ENCODE measurements at regions of chr1 and their contacts with region 1.

Region 1: GRCh38 chr1:154558575-154559465 is at the start of gene UBE2Q1:
- DNase-seq: peak; percentile 99 to 100 (median 99)
- ATAC-seq: peak; percentile 97 to 98 (median 98)
- H3K4me3 ChIP-seq: peak within 1 kb of the TSS; percentile 67 to 98 (median 95)
- H3K27ac ChIP-seq: peak within 1 kb of the TSS; percentile 85 to 97 (median 94)
- H3K4me1 ChIP-seq: peaks cover 3 to 36% (median 22%) of the 10 kb centered on the region in 12 donors
- H3K27me3 ChIP-seq: no peaks in the 10 kb centered on the region
- CTCF ChIP-seq: no peak
- POLR2A ChIP-seq: peak in 1 of 2 donors; percentile 63
- total RNA-seq, gene UBE2Q1: 22.1 to 79.4 (median 58.8) TPM

Region 2: DNA sequence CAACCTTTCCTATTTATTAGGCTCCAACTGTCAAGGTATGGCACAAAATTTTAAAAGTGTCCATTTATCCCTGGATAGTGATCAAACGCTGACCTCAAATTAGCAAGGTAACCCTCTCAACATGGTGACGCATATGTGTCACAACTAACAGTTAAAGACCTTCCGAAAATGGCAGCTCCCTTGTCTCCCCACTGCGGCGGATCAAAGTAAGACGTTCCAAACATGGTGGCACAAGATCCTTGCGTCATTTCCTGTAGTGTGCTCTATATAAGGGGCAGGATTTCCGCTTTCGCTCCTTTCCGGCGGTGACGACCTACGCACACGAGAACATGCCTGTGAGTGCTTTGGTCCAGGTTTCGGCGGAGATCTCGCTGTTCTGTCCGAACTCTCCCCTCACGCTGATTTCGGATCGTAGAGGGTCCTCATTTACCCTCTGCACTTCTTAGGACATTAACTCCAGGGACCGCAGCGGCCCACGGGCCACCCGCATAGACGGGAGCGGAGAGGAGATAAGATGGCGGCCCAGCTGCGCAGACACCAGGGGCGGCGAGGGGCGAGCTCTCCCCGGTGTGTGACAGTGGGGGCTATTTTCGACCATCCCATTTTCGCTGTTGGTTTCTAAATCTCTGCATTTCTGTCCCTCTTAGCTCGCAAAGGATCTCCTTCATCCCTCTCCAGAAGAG is 568.2 kb before region 1 on chr1 and contains the start of gene RPS27:
- intact Hi-C with region 1: no loop called
- DNase-seq: peak; percentile 84 to 95 (median 94)
- ATAC-seq: peak; percentile 76 to 90 (median 88)
- H3K4me3 ChIP-seq: peak within 1 kb of the TSS; percentile 48 to 93 (median 77)
- H3K27ac ChIP-seq: peak within 1 kb of the TSS; percentile 87 to 98 (median 94)
- H3K4me1 ChIP-seq: peaks cover 5 to 49% (median 31%) of the 10 kb centered on the region in 12 donors
- H3K27me3 ChIP-seq: no peaks in the 10 kb centered on the region
- CTCF ChIP-seq: peak in 1 of 12 donors; percentile 16
- POLR2A ChIP-seq: peak; percentile 66 to 94
- total RNA-seq, gene RPS27: 537 to 1,013 (median 772) TPM

Region 3: GRCh38 chr1:154075746-154076145 is 483.1 kb before region 1 on chr1:
- intact Hi-C with region 1: no loop called
- DNase-seq: no peak
- ATAC-seq: no peak
- H3K4me3 ChIP-seq: no peak overlapping the region
- H3K27ac ChIP-seq: no peak overlapping the region
- H3K4me1 ChIP-seq: no peaks in the 10 kb centered on the region
- H3K27me3 ChIP-seq: peaks cover 0 to 2% (median 0%) of the 10 kb centered on the region in 9 donors
- CTCF ChIP-seq: no peak
- POLR2A ChIP-seq: no peak

Region 4: GRCh38 chr1:154607609-154608396 is 49.0 kb after region 1 on chr1 and contains the start of gene ADAR:
- intact Hi-C with region 1: loop called in 1 of 10 experiments (anchors 5 kb)
- DNase-seq: peak; percentile 91 to 93 (median 93)
- ATAC-seq: peak; percentile 90 to 93 (median 92)
- H3K4me3 ChIP-seq: peak within 1 kb of the TSS; percentile 70 to 96 (median 88)
- H3K27ac ChIP-seq: peak within 1 kb of the TSS; percentile 88 to 98 (median 94)
- H3K4me1 ChIP-seq: peaks cover 4 to 79% (median 47%) of the 10 kb centered on the region in 12 donors
- H3K27me3 ChIP-seq: no peaks in the 10 kb centered on the region
- CTCF ChIP-seq: no peak
- POLR2A ChIP-seq: peak in 1 of 2 donors; percentile 50
- total RNA-seq, gene ADAR: 52.1 to 117 (median 63.1) TPM

Region 5: GRCh38 chr1:154747740-154748404 is 189.1 kb after region 1 on chr1:
- intact Hi-C with region 1: loop called in 1 of 10 experiments (anchors 10 kb)
- DNase-seq: peak in 4 of 5 donors; percentile 43 to 71 (median 61)
- ATAC-seq: peak; percentile 39 to 53 (median 47)
- H3K4me3 ChIP-seq: no peak overlapping the region
- H3K27ac ChIP-seq: peak overlapping the region in 6 of 12 donors; percentile 5 to 57 (median 30)
- H3K4me1 ChIP-seq: peaks cover 0 to 48% (median 19%) of the 10 kb centered on the region in 12 donors
- H3K27me3 ChIP-seq: no peaks in the 10 kb centered on the region
- CTCF ChIP-seq: no peak
- POLR2A ChIP-seq: no peak

Region 6: DNA sequence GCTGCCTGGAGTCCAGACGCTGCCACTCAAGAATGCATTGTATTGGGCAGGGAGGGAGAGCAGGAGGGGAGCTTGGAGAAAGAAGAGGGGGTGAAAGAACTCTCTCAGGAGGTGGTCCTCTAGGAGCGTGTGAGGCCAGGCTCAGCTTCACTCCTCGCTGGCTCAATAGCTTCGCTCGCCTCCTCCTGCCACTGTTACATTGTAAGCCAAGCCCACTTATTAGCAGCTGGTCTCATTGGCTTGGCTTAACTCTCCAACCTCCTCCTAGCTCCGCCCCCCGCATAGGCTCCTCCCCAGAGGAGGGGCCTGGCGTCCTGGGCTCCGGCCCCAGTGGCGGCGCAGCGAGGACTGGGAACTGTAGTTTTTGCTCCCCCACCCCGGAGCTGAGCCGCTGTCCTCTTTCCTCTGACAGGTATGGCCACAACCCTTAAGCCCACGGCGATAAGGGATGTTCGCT is 311.3 kb after region 1 on chr1 and contains the start of gene KCNN3:
- intact Hi-C with region 1: loop called in 5 of 10 experiments (anchors 1 to 5 kb)
- DNase-seq: peak; percentile 92 to 95 (median 94)
- ATAC-seq: peak; percentile 97 to 99 (median 98)
- H3K4me3 ChIP-seq: peak within 1 kb of the TSS; percentile 27 to 73 (median 57)
- H3K27ac ChIP-seq: peak within 1 kb of the TSS in 8 of 12 donors; percentile 27 to 65 (median 42)
- H3K4me1 ChIP-seq: peaks cover 0 to 47% (median 32%) of the 10 kb centered on the region in 12 donors
- H3K27me3 ChIP-seq: peaks cover 0 to 11% (median 0%) of the 10 kb centered on the region in 9 donors
- CTCF ChIP-seq: peak in 1 of 12 donors; percentile 5
- POLR2A ChIP-seq: peak in 1 of 2 donors; percentile 88
- total RNA-seq, gene KCNN3: 1.0 to 4.6 (median 3.0) TPM

Region 7: GRCh38 chr1:154936555-154937084 is 377.8 kb after region 1 on chr1 and contains the start of gene PMVK:
- intact Hi-C with region 1: loop called in 4 of 10 experiments (anchors 2 to 10 kb)
- DNase-seq: peak; percentile 96 to 97 (median 97)
- ATAC-seq: peak; percentile 93 to 96 (median 94)
- H3K4me3 ChIP-seq: peak within 1 kb of the TSS; percentile 39 to 80 (median 66)
- H3K27ac ChIP-seq: peak within 1 kb of the TSS; percentile 90 to 100 (median 98)
- H3K4me1 ChIP-seq: peaks cover 0 to 43% (median 18%) of the 10 kb centered on the region in 12 donors
- H3K27me3 ChIP-seq: no peaks in the 10 kb centered on the region
- CTCF ChIP-seq: peak in 10 of 12 donors; percentile 17 to 55 (median 37)
- POLR2A ChIP-seq: peak in 1 of 2 donors; percentile 46
- total RNA-seq, gene PMVK: 12.8 to 50.8 (median 37.5) TPM